Naive thymus-derived CD4-positive, alpha-beta T cell (primary cell): ENCODE measurements at regions of chr6 and their contacts with region 1.

Region 1: DNA sequence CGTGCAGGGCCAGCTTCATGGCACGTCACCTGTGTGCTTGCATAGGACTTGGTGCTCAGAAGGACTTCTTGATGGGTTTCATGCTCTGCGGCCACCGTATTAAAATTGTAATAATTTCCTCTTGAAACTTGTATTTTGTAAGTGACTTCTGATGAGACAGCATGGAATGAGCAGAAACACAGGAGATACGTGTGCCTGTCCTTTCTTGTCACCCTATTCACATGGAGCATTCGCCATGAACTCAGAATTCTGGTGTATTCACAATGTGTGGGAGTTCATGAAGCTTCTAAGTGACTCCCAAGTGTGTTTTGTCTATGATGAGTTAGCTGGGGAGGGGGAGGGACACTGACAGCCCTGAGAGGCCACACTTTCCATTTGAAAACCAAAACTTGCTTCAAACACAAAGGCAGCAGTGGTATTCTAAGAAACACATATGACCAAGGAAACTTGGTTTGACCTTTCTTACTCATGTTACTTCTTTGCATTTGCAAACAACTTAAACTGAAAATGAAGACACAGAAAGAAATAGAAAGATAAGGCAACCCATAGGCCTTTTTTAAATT is 92.1 kb upstream of the NEDD9 start:
- DNase-seq: peak in 1 of 9 donors; percentile 46
- ATAC-seq: no peak
- H3K4me3 ChIP-seq: no peak overlapping the region
- H3K4me3 Mint-ChIP-seq: peak overlapping the region in 1 of 10 donors; percentile 63
- H3K27ac ChIP-seq: no peak overlapping the region
- H3K27ac Mint-ChIP-seq: peak overlapping the region in 4 of 9 donors; percentile 14 to 88 (median 36)
- H3K4me1 ChIP-seq: no peaks in the 10 kb centered on the region
- H3K4me1 Mint-ChIP-seq: peaks cover 29 to 77% (median 43%) of the 10 kb centered on the region in 7 donors
- H3K27me3 ChIP-seq: no peaks in the 10 kb centered on the region
- H3K27me3 Mint-ChIP-seq: no peaks in the 10 kb centered on the region

Region 2: GRCh38 chr6:11258260-11259237 is 66.0 kb before region 1 on chr6:
- CTCF ChIA-PET with region 1: no interaction called
- POLR2A ChIA-PET with region 1: no interaction called
- intact Hi-C with region 1: loop called in 1 of 2 experiments (anchors 2 kb)
- DNase-seq: peak in 5 of 9 donors; percentile 5 to 24 (median 12)
- ATAC-seq: peak; percentile 83
- H3K4me3 ChIP-seq: peak overlapping the region; percentile 11
- H3K4me3 Mint-ChIP-seq: peak overlapping the region in 8 of 10 donors; percentile 6 to 65 (median 28)
- H3K27ac ChIP-seq: peak overlapping the region; percentile 6
- H3K27ac Mint-ChIP-seq: peak overlapping the region in 8 of 9 donors; percentile 37 to 84 (median 68)
- H3K4me1 ChIP-seq: peaks cover 16 to 58% of the 10 kb centered on the region in 2 donors
- H3K4me1 Mint-ChIP-seq: peaks cover 32 to 59% (median 44%) of the 10 kb centered on the region in 7 donors
- H3K27me3 ChIP-seq: no peaks in the 10 kb centered on the region
- H3K27me3 Mint-ChIP-seq: no peaks in the 10 kb centered on the region

Region 3: GRCh38 chr6:11277275-11278206 is 47.0 kb before region 1 on chr6:
- CTCF ChIA-PET with region 1: no interaction called
- POLR2A ChIA-PET with region 1: no interaction called
- intact Hi-C with region 1: loop called in 1 of 2 experiments (anchors 5 kb)
- DNase-seq: no peak
- ATAC-seq: peak; percentile 41
- H3K4me3 ChIP-seq: no peak overlapping the region
- H3K4me3 Mint-ChIP-seq: peak overlapping the region in 1 of 10 donors; percentile 49
- H3K27ac ChIP-seq: no peak overlapping the region
- H3K27ac Mint-ChIP-seq: peak overlapping the region in 4 of 9 donors; percentile 9 to 85 (median 27)
- H3K4me1 ChIP-seq: peaks cover 11 to 38% of the 10 kb centered on the region in 2 donors
- H3K4me1 Mint-ChIP-seq: peaks cover 30 to 56% (median 37%) of the 10 kb centered on the region in 7 donors
- H3K27me3 ChIP-seq: no peaks in the 10 kb centered on the region
- H3K27me3 Mint-ChIP-seq: no peaks in the 10 kb centered on the region

Region 4: GRCh38 chr6:11366183-11366933 is 41.8 kb after region 1 on chr6:
- CTCF ChIA-PET with region 1: no interaction called
- POLR2A ChIA-PET with region 1: no interaction called
- intact Hi-C with region 1: loop called in 1 of 2 experiments (anchors 2 kb)
- DNase-seq: peak in 1 of 9 donors; percentile 46
- ATAC-seq: peak; percentile 89
- H3K4me3 ChIP-seq: no peak overlapping the region
- H3K4me3 Mint-ChIP-seq: peak overlapping the region in 8 of 10 donors; percentile 9 to 73 (median 45)
- H3K27ac ChIP-seq: no peak overlapping the region
- H3K27ac Mint-ChIP-seq: peak overlapping the region in 7 of 9 donors; percentile 38 to 90 (median 56)
- H3K4me1 ChIP-seq: peaks cover 0 to 22% of the 10 kb centered on the region in 2 donors
- H3K4me1 Mint-ChIP-seq: peaks cover 50 to 87% (median 77%) of the 10 kb centered on the region in 7 donors
- H3K27me3 ChIP-seq: no peaks in the 10 kb centered on the region
- H3K27me3 Mint-ChIP-seq: no peaks in the 10 kb centered on the region

Region 5: DNA sequence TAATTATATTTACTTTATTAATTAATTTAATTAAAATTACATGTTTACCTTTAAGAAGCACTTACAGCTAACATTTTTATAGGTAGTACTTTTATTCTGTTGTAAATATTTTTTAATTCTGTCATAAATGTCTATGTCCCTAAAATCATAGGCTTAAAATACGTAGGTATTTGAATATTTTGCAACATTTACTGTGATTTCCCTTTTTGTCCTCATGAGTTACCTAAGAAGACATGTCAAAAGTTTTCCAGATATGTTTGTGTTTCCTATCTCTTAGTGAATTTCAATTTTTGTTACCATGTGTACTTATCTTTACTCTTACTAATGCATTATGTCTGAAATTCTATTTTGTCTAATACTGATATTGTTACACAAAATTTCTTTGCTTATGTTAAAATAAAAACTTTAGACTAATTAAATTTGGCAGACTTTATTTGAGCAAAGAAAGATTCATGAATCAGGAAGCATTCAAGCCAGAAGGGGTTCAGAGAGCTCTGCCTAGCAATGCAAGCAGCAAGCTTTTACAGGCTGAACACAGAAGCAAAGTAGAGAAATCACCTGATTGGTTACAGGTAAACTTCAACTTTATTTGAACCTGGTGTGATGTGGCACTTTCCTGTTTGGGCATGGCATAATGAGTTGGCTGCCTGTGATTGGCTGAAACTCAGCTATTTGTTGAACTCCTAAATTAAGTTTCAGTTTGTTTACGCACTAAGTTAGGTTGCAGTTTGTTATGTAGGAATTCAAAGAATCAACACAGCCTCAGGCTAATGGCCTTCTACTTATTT is 89.8 kb after region 1 on chr6:
- CTCF ChIA-PET with region 1: no interaction called
- POLR2A ChIA-PET with region 1: no interaction called
- intact Hi-C with region 1: loop called in 1 of 2 experiments (anchors 2 kb)
- DNase-seq: peak in 6 of 9 donors; percentile 11 to 30 (median 18)
- ATAC-seq: peak; percentile 77
- H3K4me3 ChIP-seq: no peak overlapping the region
- H3K4me3 Mint-ChIP-seq: no peak overlapping the region
- H3K27ac ChIP-seq: no peak overlapping the region
- H3K27ac Mint-ChIP-seq: peak overlapping the region in 1 of 9 donors; percentile 10
- H3K4me1 ChIP-seq: peaks cover 0 to 4% of the 10 kb centered on the region in 2 donors
- H3K4me1 Mint-ChIP-seq: peaks cover 6 to 45% (median 10%) of the 10 kb centered on the region in 7 donors
- H3K27me3 ChIP-seq: no peaks in the 10 kb centered on the region
- H3K27me3 Mint-ChIP-seq: no peaks in the 10 kb centered on the region